Head of caudate nucleus (tissue), 42 donors: ENCODE measurements at regions of chr13 and their contacts with region 1.

Region 1: GRCh38 chr13:31424117-31424729 is 224.4 kb downstream of the B3GLCT start:
- DNase-seq: peak; percentile 57 to 90 (median 77)

Region 2: GRCh38 chr13:31174018-31174417 is 250.2 kb before region 1 on chr13:
- intact Hi-C with region 1: loop called (anchors 10 kb)
- DNase-seq: peak in 16 of 42 donors; percentile 14 to 69 (median 33)

Region 3: DNA sequence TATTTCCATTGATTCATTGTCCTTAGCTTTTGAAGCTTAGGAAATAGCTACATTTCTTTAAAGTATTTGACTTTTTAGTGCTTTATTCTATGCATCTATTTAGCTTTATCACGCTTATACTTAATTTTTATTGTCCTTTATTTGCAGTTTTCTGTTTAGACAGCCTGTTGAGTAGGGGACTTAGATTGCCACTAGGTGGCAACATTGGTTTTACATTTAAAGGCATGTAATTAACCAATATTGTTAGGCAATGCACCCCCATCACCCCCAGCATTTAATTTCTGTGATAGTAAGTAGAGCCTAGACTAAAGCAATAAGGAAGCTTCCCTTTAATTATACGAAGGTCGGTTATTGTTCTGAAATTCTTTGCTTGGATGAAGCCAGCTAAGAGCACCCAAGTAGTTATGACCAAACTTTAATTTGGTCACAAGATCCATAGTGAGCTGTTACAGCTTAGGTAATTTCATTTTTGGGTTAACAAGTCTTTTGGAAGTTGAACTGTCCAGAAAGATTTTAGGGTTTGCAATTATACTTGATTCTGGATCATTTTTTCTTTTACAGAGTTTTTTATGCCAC is 187.9 kb before region 1 on chr13:
- intact Hi-C with region 1: loop called (anchors 5 kb)
- DNase-seq: peak in 5 of 42 donors; percentile 16 to 57 (median 40)